Activated CD4-positive, alpha-beta T cell treated with anti-CD3 and anti-CD28 coated beads, Interleukin-2, amount 10 ng/mL, durations not matched to agents 24 days and 14 days (primary cell): ENCODE measurements at regions of chr17 and their contacts with region 1.

Region 1: DNA sequence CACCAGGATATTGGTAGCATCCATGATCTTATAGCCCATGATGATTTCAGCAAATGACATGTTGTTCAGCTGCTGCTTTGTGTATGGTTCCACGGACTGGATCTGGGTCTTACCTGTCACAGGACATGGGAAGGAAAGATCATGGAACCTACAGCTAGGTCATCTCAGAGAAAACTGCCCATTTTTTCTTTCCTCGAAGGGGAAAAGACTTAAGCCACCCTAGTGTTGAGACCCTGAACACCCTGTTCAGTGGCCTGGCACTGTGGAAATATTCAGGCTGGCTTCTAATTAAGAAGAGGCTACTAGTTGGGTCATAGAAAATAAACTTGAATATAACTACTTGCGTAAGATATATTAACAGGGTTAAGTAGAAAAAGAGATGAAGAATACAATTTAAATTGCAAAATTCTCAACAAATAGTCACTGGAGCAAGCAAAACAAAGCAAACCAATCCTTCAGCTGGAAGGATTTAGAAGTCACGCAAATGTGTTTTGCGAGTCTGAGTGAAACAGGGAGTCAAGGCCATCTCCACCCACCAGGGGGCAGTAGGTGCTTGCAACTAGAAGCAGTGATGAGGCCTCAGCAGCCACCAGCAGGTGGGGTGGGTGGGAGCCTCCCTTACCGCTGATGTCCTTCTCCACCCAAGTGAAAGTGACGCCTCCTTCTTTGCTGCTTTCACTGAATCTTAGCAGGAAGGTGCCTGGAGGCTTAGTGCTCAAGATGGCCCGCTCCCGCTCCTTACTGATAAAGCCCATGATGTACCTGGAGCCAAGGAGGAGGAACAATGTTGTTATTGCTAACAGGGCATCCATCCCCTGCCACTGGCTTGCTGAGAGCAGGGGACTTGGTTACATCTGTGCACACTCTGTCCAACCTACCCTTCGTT is 34.3 kb downstream of the STAT5A start:
- DNase-seq: peak; percentile 98
- H3K4me3 Mint-ChIP-seq: peak overlapping the region; percentile 39
- H3K27ac Mint-ChIP-seq: peak overlapping the region; percentile 73
- H3K4me1 Mint-ChIP-seq: peaks cover 41% of the 10 kb centered on the region
- H3K27me3 Mint-ChIP-seq: no peaks in the 10 kb centered on the region

Region 2: GRCh38 chr17:42405963-42406495 is 83.4 kb after region 1 on chr17:
- intact Hi-C with region 1: loop called (anchors 1 kb)
- DNase-seq: peak; percentile 95
- H3K4me3 Mint-ChIP-seq: no peak overlapping the region
- H3K27ac Mint-ChIP-seq: no peak overlapping the region
- H3K4me1 Mint-ChIP-seq: peaks cover 21% of the 10 kb centered on the region
- H3K27me3 Mint-ChIP-seq: peaks cover 4% of the 10 kb centered on the region